ENCODE measurements at regions of chr5 and their contacts with region 1.

Region 1: GRCh38 chr5:116197278-116197677 is 112.5 kb downstream of the COMMD10 start:
- DNase-seq: no peak
- H3K4me3 ChIP-seq: no peak overlapping the region
- H3K27ac ChIP-seq: no peak overlapping the region
- H3K4me1 ChIP-seq: no peaks in the 10 kb centered on the region
- H3K27me3 ChIP-seq: no peaks in the 10 kb centered on the region
- CTCF ChIP-seq: no peak
- EP300 ChIP-seq: no peak
- POLR2A ChIP-seq: no peak

Region 2: GRCh38 chr5:116242343-116242742 is 45.1 kb after region 1 on chr5:
- intact Hi-C with region 1: no loop called
- DNase-seq: no peak
- H3K4me3 ChIP-seq: no peak overlapping the region
- H3K27ac ChIP-seq: no peak overlapping the region
- H3K4me1 ChIP-seq: no peaks in the 10 kb centered on the region
- H3K27me3 ChIP-seq: no peaks in the 10 kb centered on the region
- CTCF ChIP-seq: no peak
- EP300 ChIP-seq: no peak
- POLR2A ChIP-seq: no peak

Region 3: GRCh38 chr5:117590944-117591343 is 1393.7 kb after region 1 on chr5:
- intact Hi-C with region 1: loop called in 1 of 4 experiments (anchors 5 kb)
- DNase-seq: no peak
- H3K4me3 ChIP-seq: no peak overlapping the region
- H3K27ac ChIP-seq: no peak overlapping the region
- H3K4me1 ChIP-seq: no peaks in the 10 kb centered on the region
- H3K27me3 ChIP-seq: no peaks in the 10 kb centered on the region
- CTCF ChIP-seq: no peak
- EP300 ChIP-seq: no peak
- POLR2A ChIP-seq: no peak